CD4-positive, alpha-beta memory T cell (primary cell): ENCODE measurements at regions of chr17 and their contacts with region 1.

Region 1: GRCh38 chr17:32783602-32784001 is 93.3 kb downstream of the MYO1D start:
- DNase-seq: peak in 4 of 5 donors; percentile 46 to 55 (median 50)
- H3K4me3 ChIP-seq: no peak overlapping the region
- H3K4me3 Mint-ChIP-seq: no peak overlapping the region
- H3K27ac ChIP-seq: no peak overlapping the region
- H3K27ac Mint-ChIP-seq: no peak overlapping the region
- H3K4me1 ChIP-seq: no peaks in the 10 kb centered on the region
- H3K4me1 Mint-ChIP-seq: no peaks in the 10 kb centered on the region
- H3K27me3 ChIP-seq: no peaks in the 10 kb centered on the region
- H3K27me3 Mint-ChIP-seq: no peaks in the 10 kb centered on the region

Region 2: GRCh38 chr17:32033223-32033622 is 750.4 kb before region 1 on chr17:
- CTCF ChIA-PET with region 1: no interaction called
- POLR2A ChIA-PET with region 1: no interaction called
- intact Hi-C with region 1: no loop called
- DNase-seq: no peak
- H3K4me3 ChIP-seq: no peak overlapping the region
- H3K4me3 Mint-ChIP-seq: no peak overlapping the region
- H3K27ac ChIP-seq: no peak overlapping the region
- H3K27ac Mint-ChIP-seq: no peak overlapping the region
- H3K4me1 ChIP-seq: no peaks in the 10 kb centered on the region
- H3K4me1 Mint-ChIP-seq: no peaks in the 10 kb centered on the region
- H3K27me3 ChIP-seq: no peaks in the 10 kb centered on the region
- H3K27me3 Mint-ChIP-seq: no peaks in the 10 kb centered on the region

Region 3: DNA sequence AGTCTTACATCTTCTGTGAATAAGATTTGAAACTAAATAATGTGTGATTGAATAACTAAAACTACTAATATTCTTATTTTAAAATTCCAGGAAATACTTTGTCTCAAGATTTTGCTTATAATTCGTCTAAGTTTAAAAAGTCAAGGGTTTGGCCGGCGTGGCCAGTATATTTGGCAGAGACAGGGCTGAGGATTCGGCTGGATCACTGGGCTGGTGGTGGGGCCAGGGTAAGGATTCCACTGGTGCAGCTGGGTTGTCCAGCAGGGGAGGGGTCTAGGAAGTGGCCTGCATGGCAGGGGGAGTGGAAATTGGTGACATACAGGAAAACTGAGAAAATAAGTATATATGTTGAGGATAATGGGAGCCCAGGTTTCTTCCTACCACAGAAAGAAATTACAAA is 17.6 kb after region 1 on chr17:
- CTCF ChIA-PET with region 1: interaction called, 13 read pairs
- POLR2A ChIA-PET with region 1: no interaction called
- intact Hi-C with region 1: no loop called
- DNase-seq: no peak
- H3K4me3 ChIP-seq: no peak overlapping the region
- H3K4me3 Mint-ChIP-seq: no peak overlapping the region
- H3K27ac ChIP-seq: no peak overlapping the region
- H3K27ac Mint-ChIP-seq: no peak overlapping the region
- H3K4me1 ChIP-seq: no peaks in the 10 kb centered on the region
- H3K4me1 Mint-ChIP-seq: no peaks in the 10 kb centered on the region
- H3K27me3 ChIP-seq: no peaks in the 10 kb centered on the region
- H3K27me3 Mint-ChIP-seq: peaks cover 0 to 2% of the 10 kb centered on the region in 2 donors

Region 4: GRCh38 chr17:32909787-32910369 is 126.3 kb after region 1 on chr17:
- CTCF ChIA-PET with region 1: interaction called, 17 read pairs
- POLR2A ChIA-PET with region 1: no interaction called
- intact Hi-C with region 1: loop called (anchors 1 kb)
- DNase-seq: peak; percentile 29 to 59 (median 32)
- H3K4me3 ChIP-seq: no peak overlapping the region
- H3K4me3 Mint-ChIP-seq: no peak overlapping the region
- H3K27ac ChIP-seq: no peak overlapping the region
- H3K27ac Mint-ChIP-seq: no peak overlapping the region
- H3K4me1 ChIP-seq: no peaks in the 10 kb centered on the region
- H3K4me1 Mint-ChIP-seq: peaks cover 0 to 1% (median 0%) of the 10 kb centered on the region in 4 donors
- H3K27me3 ChIP-seq: no peaks in the 10 kb centered on the region
- H3K27me3 Mint-ChIP-seq: peaks cover 0 to 2% of the 10 kb centered on the region in 2 donors

Region 5: GRCh38 chr17:32936894-32937500 is 153.4 kb after region 1 on chr17:
- CTCF ChIA-PET with region 1: interaction called, 116 read pairs
- POLR2A ChIA-PET with region 1: no interaction called
- intact Hi-C with region 1: loop called (anchors 1 kb)
- DNase-seq: peak; percentile 38 to 53 (median 49)
- H3K4me3 ChIP-seq: no peak overlapping the region
- H3K4me3 Mint-ChIP-seq: peak overlapping the region in 3 of 8 donors; percentile 30 to 67 (median 65)
- H3K27ac ChIP-seq: no peak overlapping the region
- H3K27ac Mint-ChIP-seq: peak overlapping the region in 1 of 7 donors; percentile 62
- H3K4me1 ChIP-seq: peaks cover 4% of the 10 kb centered on the region
- H3K4me1 Mint-ChIP-seq: peaks cover 0 to 6% (median 4%) of the 10 kb centered on the region in 4 donors
- H3K27me3 ChIP-seq: no peaks in the 10 kb centered on the region
- H3K27me3 Mint-ChIP-seq: peaks cover 14 to 28% of the 10 kb centered on the region in 2 donors

Region 6: GRCh38 chr17:32997753-32998632 is 214.4 kb after region 1 on chr17:
- CTCF ChIA-PET with region 1: interaction called, 17 read pairs
- POLR2A ChIA-PET with region 1: no interaction called
- intact Hi-C with region 1: loop called (anchors 1 kb)
- DNase-seq: peak; percentile 34 to 52 (median 50)
- H3K4me3 ChIP-seq: no peak overlapping the region
- H3K4me3 Mint-ChIP-seq: peak overlapping the region in 5 of 8 donors; percentile 11 to 42 (median 17)
- H3K27ac ChIP-seq: no peak overlapping the region
- H3K27ac Mint-ChIP-seq: no peak overlapping the region
- H3K4me1 ChIP-seq: peaks cover 7% of the 10 kb centered on the region
- H3K4me1 Mint-ChIP-seq: peaks cover 4 to 6% (median 5%) of the 10 kb centered on the region in 4 donors
- H3K27me3 ChIP-seq: no peaks in the 10 kb centered on the region
- H3K27me3 Mint-ChIP-seq: peaks cover 6 to 11% of the 10 kb centered on the region in 2 donors